ENCODE measurements at regions of chr9 and their contacts with region 1.

Region 1: GRCh38 chr9:109903515-109904138 is 123.6 kb downstream of the PALM2AKAP2 start:
- DNase-seq: peak; percentile 76
- H3K4me3 ChIP-seq: no peak overlapping the region
- H3K27ac ChIP-seq: no peak overlapping the region
- H3K4me1 ChIP-seq: peaks cover 13% of the 10 kb centered on the region
- H3K27me3 ChIP-seq: no peaks in the 10 kb centered on the region
- CTCF ChIP-seq: peak; percentile 79

Region 2: GRCh38 chr9:109574068-109574882 is 329.4 kb before region 1 on chr9:
- intact Hi-C with region 1: no loop called
- DNase-seq: peak; percentile 47
- H3K4me3 ChIP-seq: no peak overlapping the region
- H3K27ac ChIP-seq: no peak overlapping the region
- H3K4me1 ChIP-seq: no peaks in the 10 kb centered on the region
- H3K27me3 ChIP-seq: no peaks in the 10 kb centered on the region
- CTCF ChIP-seq: peak; percentile 38

Region 3: GRCh38 chr9:109699019-109699418 is 204.6 kb before region 1 on chr9:
- intact Hi-C with region 1: no loop called
- DNase-seq: no peak
- H3K4me3 ChIP-seq: no peak overlapping the region
- H3K27ac ChIP-seq: no peak overlapping the region
- H3K4me1 ChIP-seq: no peaks in the 10 kb centered on the region
- H3K27me3 ChIP-seq: no peaks in the 10 kb centered on the region
- CTCF ChIP-seq: no peak

Region 4: DNA sequence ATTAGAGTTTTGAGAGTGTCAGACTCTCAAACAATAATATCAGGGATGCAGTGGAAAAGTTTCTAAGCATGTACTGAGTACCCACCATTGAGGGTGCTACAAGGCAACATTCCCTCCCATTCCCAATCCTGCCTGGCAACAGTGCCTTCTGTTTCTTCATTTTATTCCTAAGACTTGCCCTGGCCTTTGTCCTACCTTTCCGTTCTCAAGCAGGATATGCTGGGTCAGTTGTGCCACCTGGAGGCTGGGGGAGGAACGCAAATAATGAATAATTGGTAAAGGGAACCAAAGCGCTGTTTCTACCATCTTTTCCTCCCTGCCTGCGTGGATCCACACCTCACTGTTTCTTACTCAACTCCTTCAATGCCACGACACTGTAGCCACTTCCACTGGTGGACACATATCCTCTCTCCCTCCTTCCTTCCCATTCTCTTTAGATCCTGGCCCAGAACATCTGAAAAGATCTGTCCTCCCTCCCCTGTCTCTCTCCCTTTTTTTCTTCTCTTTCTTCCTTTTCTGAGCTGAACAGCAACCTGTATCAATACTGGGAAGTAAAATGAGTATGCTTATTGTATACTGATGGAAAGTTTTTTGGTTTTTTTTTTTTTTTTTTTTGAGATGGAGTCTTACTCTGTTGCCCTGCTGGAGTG is 154.8 kb after region 1 on chr9:
- intact Hi-C with region 1: loop called (anchors 2 kb)
- DNase-seq: peak; percentile 78
- H3K4me3 ChIP-seq: no peak overlapping the region
- H3K27ac ChIP-seq: no peak overlapping the region
- H3K4me1 ChIP-seq: no peaks in the 10 kb centered on the region
- H3K27me3 ChIP-seq: no peaks in the 10 kb centered on the region
- CTCF ChIP-seq: peak; percentile 52

Measured in colonic mucosa (tissue), 4 donors.